Heart right ventricle (tissue), 16 donors: ENCODE measurements at regions of chr17 and their contacts with region 1.

Region 1: DNA sequence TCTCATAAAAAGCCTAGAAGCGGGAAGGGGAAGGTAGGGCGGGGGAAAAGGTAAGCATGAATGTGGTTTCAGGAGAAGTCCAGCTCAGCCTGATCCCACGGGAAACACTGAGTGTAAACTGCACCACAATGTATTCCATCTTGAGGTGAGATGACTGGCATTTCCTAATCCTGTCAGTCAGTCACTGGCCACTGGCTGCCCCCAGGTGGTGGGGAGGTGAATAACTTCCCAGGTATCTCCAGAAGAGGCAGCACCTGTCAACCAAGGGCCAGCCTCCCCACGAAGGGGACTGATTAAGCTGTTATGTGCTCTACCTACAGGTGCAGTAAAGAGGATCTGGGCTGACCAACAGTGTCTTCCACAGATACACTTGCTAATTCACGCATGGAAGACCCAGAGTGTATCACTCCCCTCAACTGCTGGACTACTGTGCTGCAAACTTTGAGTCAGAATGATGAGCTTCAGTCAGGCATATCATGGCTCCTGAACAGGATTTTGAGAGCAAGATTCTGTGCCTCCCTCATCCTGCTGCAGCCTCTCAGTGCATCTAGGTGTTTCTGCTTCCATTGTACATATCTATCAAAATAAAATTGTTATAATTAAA is 108.5 kb upstream of the CCL2 start:
- DNase-seq: peak; percentile 37 to 53
- ATAC-seq: peak in 3 of 8 donors; percentile 41 to 64 (median 61)
- H3K4me3 ChIP-seq: no peak overlapping the region
- H3K27ac ChIP-seq: no peak overlapping the region
- H3K4me1 ChIP-seq: no peaks in the 10 kb centered on the region
- H3K27me3 ChIP-seq: peaks cover 0 to 46% (median 23%) of the 10 kb centered on the region in 7 donors
- CTCF ChIP-seq: peak; percentile 18 to 65 (median 54)

Region 2: GRCh38 chr17:33779225-33779591 is 367.3 kb before region 1 on chr17:
- intact Hi-C with region 1: loop called in 7 of 10 experiments (anchors 2 to 10 kb)
- DNase-seq: peak in 1 of 2 donors; percentile 34
- ATAC-seq: no peak
- H3K4me3 ChIP-seq: no peak overlapping the region
- H3K27ac ChIP-seq: no peak overlapping the region
- H3K4me1 ChIP-seq: no peaks in the 10 kb centered on the region
- H3K27me3 ChIP-seq: peaks cover 0 to 55% (median 21%) of the 10 kb centered on the region in 7 donors
- CTCF ChIP-seq: peak; percentile 90 to 98 (median 94)

Region 3: GRCh38 chr17:33786478-33786877 is 360.1 kb before region 1 on chr17:
- intact Hi-C with region 1: loop called in 2 of 10 experiments (anchors 5 to 10 kb)
- DNase-seq: peak; percentile 13 to 17
- ATAC-seq: no peak
- H3K4me3 ChIP-seq: no peak overlapping the region
- H3K27ac ChIP-seq: no peak overlapping the region
- H3K4me1 ChIP-seq: no peaks in the 10 kb centered on the region
- H3K27me3 ChIP-seq: peaks cover 0 to 39% (median 20%) of the 10 kb centered on the region in 7 donors
- CTCF ChIP-seq: no peak

Region 4: DNA sequence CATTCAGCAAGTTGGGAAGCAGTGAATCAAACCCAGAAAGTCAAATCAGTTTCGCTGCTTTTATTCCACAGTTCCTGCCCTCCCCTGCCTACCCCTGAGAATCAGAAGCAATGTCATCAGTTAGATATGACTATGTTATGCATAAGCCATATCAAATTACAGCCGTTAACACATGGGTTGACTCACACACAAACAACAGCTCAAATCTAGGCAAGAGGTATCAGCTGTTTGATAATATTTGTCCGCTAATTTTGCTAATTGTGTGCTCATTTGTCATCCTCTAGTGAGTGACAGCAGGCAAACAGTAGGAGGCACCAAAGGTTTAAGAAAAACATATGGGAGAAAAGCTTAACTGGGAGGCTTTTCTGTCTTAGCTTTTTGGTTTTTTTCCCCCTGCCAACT is 218.8 kb before region 1 on chr17:
- intact Hi-C with region 1: loop called in 9 of 10 experiments (anchors 2 to 10 kb)
- DNase-seq: no peak
- ATAC-seq: peak in 1 of 8 donors; percentile 49
- H3K4me3 ChIP-seq: no peak overlapping the region
- H3K27ac ChIP-seq: no peak overlapping the region
- H3K4me1 ChIP-seq: no peaks in the 10 kb centered on the region
- H3K27me3 ChIP-seq: peaks cover 0 to 60% (median 32%) of the 10 kb centered on the region in 7 donors
- CTCF ChIP-seq: peak in 7 of 9 donors; percentile 19 to 60 (median 52)

Region 5: GRCh38 chr17:33934696-33935095 is 211.8 kb before region 1 on chr17:
- intact Hi-C with region 1: loop called (anchors 2 to 10 kb)
- DNase-seq: no peak
- ATAC-seq: no peak
- H3K4me3 ChIP-seq: no peak overlapping the region
- H3K27ac ChIP-seq: no peak overlapping the region
- H3K4me1 ChIP-seq: no peaks in the 10 kb centered on the region
- H3K27me3 ChIP-seq: peaks cover 0 to 24% (median 8%) of the 10 kb centered on the region in 7 donors
- CTCF ChIP-seq: no peak

Region 6: GRCh38 chr17:34081269-34081668 is 65.3 kb before region 1 on chr17:
- intact Hi-C with region 1: loop called in 2 of 10 experiments (anchors 5 kb)
- DNase-seq: no peak
- ATAC-seq: no peak
- H3K4me3 ChIP-seq: no peak overlapping the region
- H3K27ac ChIP-seq: no peak overlapping the region
- H3K4me1 ChIP-seq: no peaks in the 10 kb centered on the region
- H3K27me3 ChIP-seq: peaks cover 0 to 28% (median 14%) of the 10 kb centered on the region in 7 donors
- CTCF ChIP-seq: peak in 6 of 9 donors; percentile 26 to 44 (median 30)

Region 7: DNA sequence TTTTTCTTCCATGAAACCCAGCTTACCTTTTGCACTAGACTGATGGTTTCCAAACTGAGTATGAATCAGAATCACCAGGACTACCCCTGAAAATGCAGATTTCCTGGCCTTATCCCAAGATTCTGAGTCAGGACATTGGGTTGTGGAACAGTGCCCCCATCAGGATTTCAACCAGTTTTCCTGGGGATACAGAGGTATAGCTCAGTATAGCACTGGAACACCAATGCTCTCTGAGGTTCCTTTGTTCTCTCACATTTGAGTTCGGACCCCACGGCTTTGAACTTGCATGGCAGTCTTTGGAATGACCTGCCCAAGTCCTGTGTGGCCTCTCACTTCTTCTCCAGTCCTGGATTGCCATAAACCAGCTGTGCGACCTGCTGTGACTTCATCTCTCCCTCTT is 159.9 kb after region 1 on chr17:
- intact Hi-C with region 1: no loop called
- DNase-seq: peak in 1 of 2 donors; percentile 48
- ATAC-seq: peak; percentile 68 to 86 (median 80)
- H3K4me3 ChIP-seq: no peak overlapping the region
- H3K27ac ChIP-seq: peak overlapping the region in 5 of 10 donors; percentile 2 to 69 (median 30)
- H3K4me1 ChIP-seq: peaks cover 0 to 64% (median 32%) of the 10 kb centered on the region in 9 donors
- H3K27me3 ChIP-seq: peaks cover 0 to 5% (median 0%) of the 10 kb centered on the region in 7 donors
- CTCF ChIP-seq: peak in 8 of 9 donors; percentile 45 to 69 (median 55)

Region 8: GRCh38 chr17:34740565-34741520 is 594.3 kb after region 1 on chr17:
- intact Hi-C with region 1: no loop called
- DNase-seq: no peak
- ATAC-seq: no peak
- H3K4me3 ChIP-seq: no peak overlapping the region
- H3K27ac ChIP-seq: no peak overlapping the region
- H3K4me1 ChIP-seq: no peaks in the 10 kb centered on the region
- H3K27me3 ChIP-seq: peaks cover 0 to 28% (median 15%) of the 10 kb centered on the region in 7 donors
- CTCF ChIP-seq: no peak